CD14-positive monocyte (primary cell): ENCODE measurements at regions of chrX and their contacts with region 1.

Region 1: DNA sequence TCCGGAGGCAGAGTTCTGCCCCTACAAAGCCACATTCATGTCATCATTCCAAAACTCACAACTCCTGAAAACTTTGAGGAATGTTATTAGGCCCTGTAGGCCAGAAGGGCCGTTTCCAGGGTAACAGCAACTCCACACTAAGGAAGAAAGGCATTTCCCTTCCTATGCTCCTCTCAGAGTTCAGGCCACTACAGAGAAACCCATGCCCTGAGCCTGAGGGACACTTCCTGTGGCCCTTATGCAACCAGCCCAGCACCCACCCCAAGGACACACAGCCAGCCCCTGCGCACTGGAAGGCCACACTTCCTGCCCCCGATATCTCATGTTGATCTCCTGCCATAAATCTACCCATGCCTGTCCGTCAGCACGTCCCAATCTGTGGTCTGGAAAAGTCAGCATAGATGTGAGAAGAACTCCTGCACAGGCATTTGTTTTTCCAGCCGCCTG is 289.3 kb downstream of the BCOR start:
- DNase-seq: peak in 2 of 3 donors; percentile 0 to 8
- H3K4me3 ChIP-seq: no peak overlapping the region
- H3K4me3 Mint-ChIP-seq: peak overlapping the region; percentile 39 to 80
- H3K27ac ChIP-seq: no peak overlapping the region
- H3K27ac Mint-ChIP-seq: peak overlapping the region in 2 of 7 donors; percentile 23 to 60
- H3K4me1 ChIP-seq: peaks cover 18% of the 10 kb centered on the region in 2 donors
- H3K4me1 Mint-ChIP-seq: peaks cover 19% of the 10 kb centered on the region
- H3K27me3 ChIP-seq: no peaks in the 10 kb centered on the region
- H3K27me3 Mint-ChIP-seq: peaks cover 0 to 4% (median 3%) of the 10 kb centered on the region in 3 donors
- CTCF ChIP-seq: no peak

Region 2: GRCh38 chrX:39398963-39399261 is 409.6 kb before region 1 on chrX:
- intact Hi-C with region 1: no loop called
- DNase-seq: no peak
- H3K4me3 ChIP-seq: no peak overlapping the region
- H3K4me3 Mint-ChIP-seq: no peak overlapping the region
- H3K27ac ChIP-seq: no peak overlapping the region
- H3K27ac Mint-ChIP-seq: no peak overlapping the region
- H3K4me1 ChIP-seq: no peaks in the 10 kb centered on the region
- H3K4me1 Mint-ChIP-seq: no peaks in the 10 kb centered on the region
- H3K27me3 ChIP-seq: no peaks in the 10 kb centered on the region
- H3K27me3 Mint-ChIP-seq: peaks cover 5 to 10% (median 8%) of the 10 kb centered on the region in 3 donors
- CTCF ChIP-seq: no peak

Region 3: DNA sequence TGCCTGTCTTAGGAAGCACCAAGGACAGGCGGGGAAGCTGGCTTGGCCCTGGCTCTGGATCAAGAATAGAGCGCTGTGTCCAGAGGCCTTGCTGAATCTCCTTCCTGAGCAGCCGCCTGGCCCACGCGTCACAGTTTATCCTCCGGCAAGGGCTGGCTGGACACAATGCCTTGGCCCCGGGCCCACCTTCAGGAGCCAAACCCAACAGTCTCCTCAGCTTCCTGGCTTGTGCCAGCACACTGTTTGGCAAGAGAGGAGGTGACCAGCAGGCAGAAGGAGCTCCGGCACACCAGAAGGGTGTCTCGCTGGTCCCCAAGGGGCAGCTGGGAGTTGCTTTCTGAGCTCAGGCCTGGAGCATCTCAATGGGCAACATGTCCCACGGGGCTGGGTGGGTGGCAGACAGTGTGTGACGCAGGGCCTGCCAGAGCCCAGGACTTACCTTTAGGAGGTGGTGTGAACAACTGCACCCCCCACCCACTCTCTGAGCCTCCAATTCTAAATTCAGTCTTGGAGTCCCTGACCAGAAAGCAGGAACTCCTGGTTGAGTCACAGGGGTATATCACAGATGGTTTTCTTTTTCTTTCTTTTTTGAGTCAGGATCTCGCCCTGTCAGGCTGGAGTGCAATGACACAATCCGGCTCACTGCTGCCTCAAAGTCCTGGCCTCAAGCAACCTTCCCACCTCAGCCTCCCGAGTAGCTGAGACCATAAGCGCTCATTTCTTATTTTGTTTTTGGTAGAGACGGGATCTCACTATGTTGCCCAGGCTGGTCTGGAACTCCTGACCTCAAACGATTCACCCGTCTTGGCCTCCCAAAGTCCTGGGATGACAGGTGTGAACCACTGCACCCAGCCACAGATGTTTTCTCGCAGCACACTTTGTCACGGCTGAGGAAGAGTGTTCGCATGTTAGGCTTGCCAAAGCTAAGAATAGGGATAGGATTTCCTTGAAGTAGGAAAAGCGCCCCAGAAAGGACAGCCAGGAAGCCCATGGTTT is 72.0 kb before region 1 on chrX:
- intact Hi-C with region 1: loop called in 1 of 2 experiments (anchors 5 kb)
- DNase-seq: peak; percentile 25 to 42 (median 26)
- H3K4me3 ChIP-seq: no peak overlapping the region
- H3K4me3 Mint-ChIP-seq: no peak overlapping the region
- H3K27ac ChIP-seq: no peak overlapping the region
- H3K27ac Mint-ChIP-seq: peak overlapping the region in 4 of 7 donors; percentile 32 to 83 (median 41)
- H3K4me1 ChIP-seq: peaks cover 13 to 23% of the 10 kb centered on the region in 2 donors
- H3K4me1 Mint-ChIP-seq: peaks cover 24% of the 10 kb centered on the region
- H3K27me3 ChIP-seq: no peaks in the 10 kb centered on the region
- H3K27me3 Mint-ChIP-seq: peaks cover 1 to 7% (median 4%) of the 10 kb centered on the region in 3 donors
- CTCF ChIP-seq: no peak